GM13976 (cell line): ENCODE measurements at regions of chr10 and their contacts with region 1.

Region 1: DNA sequence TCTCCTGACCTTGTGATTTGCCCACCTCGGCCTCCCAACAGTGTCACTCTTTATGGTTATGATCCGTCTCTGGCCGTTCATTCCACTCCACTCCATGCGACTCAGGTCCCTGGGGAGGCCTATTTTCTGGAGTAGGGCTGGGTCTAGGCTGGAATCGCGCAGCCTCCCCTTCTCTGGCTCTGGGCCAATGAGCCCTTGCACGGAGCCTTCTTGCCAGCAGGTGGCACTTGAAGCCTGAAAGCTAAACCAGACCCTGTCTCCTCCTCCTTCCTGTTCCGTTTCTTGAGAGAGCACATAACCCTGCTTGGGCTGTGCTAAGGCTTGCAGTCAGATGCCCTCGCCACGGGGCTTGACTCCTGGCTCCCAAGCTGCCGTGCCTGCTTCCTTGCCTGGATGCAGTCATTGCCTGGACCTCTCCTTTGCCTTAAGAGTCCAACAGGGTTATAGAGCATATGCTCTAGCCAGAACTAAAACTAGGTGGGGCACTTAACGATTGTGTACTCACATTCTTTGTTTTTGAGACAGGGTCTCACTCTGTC is 9.6 kb upstream of the DNAJB12 start:
- DNase-seq: peak; percentile 84
- CTCF ChIP-seq: peak; percentile 82

Region 2: GRCh38 chr10:72567884-72568640 is 203.8 kb after region 1 on chr10:
- in situ Hi-C with region 1: loop called (anchors 10 kb)
- DNase-seq: peak; percentile 20
- CTCF ChIP-seq: peak; percentile 8

Region 3: GRCh38 chr10:72834183-72834825 is 470.0 kb after region 1 on chr10:
- in situ Hi-C with region 1: loop called (anchors 5 kb)
- DNase-seq: peak; percentile 53
- CTCF ChIP-seq: peak; percentile 50

Region 4: DNA sequence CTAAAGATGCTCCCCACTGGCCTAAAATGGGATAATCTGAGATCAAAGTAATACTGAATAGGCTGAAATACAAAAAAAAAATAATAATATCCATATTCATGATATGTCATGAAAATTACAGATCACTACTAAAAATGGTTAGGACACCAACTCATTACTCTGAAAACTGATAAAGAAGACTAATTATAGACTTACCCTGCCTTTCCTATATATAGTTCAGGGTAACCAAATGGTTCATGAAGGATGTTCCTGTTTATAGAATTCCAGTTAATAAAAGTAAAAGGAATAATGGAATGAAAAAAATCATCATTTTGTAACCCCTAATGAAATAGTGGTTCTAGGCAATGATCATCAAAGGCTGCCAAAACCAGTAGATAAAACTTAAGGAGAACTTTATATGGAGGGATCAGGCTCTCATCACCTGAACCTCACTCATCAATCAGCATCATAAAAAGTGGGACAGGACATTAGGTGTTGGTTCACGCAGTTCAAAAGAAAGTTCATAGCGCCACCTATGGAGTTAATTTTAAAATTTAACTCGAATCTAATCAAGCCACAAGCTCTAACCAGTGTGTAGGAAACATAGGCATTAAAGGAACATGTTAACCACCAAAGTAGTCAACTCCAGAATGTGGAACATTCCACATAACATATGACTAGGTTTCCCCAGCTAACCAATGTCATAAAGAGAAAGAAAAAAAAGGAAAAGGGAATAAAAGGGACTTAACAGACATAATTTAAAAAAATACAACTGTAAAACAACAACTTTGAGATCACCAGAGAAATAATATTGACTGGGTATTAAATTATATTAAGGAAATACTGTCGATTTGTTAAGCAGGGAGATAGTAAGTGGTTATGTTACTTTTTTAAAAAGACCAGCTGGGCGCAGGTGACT is 696.7 kb after region 1 on chr10:
- in situ Hi-C with region 1: loop called (anchors 25 kb)
- DNase-seq: peak; percentile 22
- CTCF ChIP-seq: peak; percentile 6

Region 5: DNA sequence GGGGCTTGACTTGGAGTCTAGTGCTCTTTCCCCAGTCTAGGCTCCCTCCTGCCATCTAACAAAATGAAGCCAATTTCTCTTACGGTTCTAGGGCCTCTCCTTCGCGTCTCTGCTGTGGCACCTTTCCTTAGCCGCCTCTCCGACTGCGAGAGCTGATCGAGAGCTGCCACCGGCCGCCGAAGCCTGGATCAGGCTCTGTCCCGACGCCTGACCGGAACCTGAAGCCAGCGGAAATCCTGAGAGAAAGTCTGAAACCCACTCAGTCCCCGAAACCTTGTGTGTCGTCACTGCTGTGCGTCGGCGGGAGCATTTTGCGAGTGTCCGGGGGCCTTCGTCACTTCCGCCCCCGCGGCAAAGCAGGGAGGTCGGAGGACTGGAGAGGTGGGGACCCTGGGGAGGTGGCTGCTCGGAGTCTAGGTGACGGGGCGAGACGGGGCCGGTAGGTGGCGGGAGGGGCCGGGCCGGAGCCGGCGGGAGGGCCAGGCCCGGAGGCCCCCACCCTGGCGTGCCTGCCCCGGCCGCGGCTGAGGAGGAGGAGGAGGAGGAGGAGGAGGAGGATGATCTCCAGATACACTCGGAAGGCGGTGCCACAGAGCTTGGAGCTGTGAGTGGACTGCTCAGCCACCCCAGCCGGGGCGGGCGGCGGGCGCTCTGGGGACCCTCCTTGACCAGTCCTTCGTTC is 803.6 kb after region 1 on chr10 and contains the starts of genes ECD and FAM149B1:
- in situ Hi-C with region 1: loop called (anchors 25 kb)
- DNase-seq: peak; percentile 94
- CTCF ChIP-seq: peak; percentile 19